HEK293 (cell line): ENCODE measurements at regions of chr7 and their contacts with region 1.

Region 1: GRCh38 chr7:73522105-73522872 is at the start of gene BAZ1B:
- H3K4me3 ChIP-seq: peak within 1 kb of the TSS; percentile 93
- H3K27ac ChIP-seq: peak within 1 kb of the TSS; percentile 99
- H3K4me1 ChIP-seq: no peaks in the 10 kb centered on the region
- CTCF ChIP-seq: peak; percentile 54; the same call in 1 of the 2 replicates

Region 2: DNA sequence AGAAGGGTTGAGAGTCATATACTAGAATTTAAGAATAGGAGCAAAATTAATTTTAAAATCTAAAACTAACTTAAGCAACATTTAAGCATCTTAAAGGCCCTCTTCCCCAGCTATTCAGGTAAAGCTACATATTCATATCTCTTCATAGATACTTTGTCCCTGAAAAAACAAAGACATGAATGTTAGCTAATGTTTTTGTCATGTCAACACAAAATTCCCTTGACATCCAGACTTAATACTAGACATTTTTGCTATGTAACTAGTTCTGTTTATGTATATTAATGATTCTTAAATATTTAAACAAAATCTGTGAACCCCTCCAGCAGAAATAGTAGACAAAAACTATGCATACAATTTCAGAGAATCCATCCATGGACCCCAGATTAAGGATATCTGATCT is 43.7 kb before region 1 on chr7:
- CTCF ChIA-PET with region 1: no interaction called
- POLR2A ChIA-PET with region 1: no interaction called
- H3K4me3 ChIP-seq: no peak overlapping the region
- H3K27ac ChIP-seq: no peak overlapping the region
- H3K4me1 ChIP-seq: peaks cover 2% of the 10 kb centered on the region; the same call in 1 of the 2 replicates
- CTCF ChIP-seq: no peak

Region 3: DNA sequence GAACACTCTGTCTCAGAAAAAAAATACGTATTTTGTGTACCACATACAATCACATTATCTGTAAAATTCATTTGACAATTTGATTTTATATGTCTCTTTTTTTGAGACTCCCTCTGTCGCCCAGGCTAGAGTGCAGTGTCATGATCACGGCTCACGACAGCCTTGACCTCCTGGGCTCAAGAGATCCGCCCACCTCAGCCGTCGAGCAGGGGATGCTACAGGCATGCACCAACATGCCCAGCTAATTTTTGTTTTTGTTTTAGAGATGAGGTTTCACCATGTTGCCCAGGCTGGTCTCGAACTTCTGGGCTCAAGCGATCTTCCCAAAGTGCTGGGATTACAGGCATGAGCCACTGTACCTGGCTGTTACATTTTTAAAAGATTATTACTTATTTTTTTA is 11.5 kb after region 1 on chr7:
- CTCF ChIA-PET with region 1: interaction called, 4 read pairs
- POLR2A ChIA-PET with region 1: interaction called, 12 read pairs
- H3K4me3 ChIP-seq: no peak overlapping the region
- H3K27ac ChIP-seq: no peak overlapping the region; the same call in 1 of the 2 replicates
- H3K4me1 ChIP-seq: no peaks in the 10 kb centered on the region
- CTCF ChIP-seq: no peak

Region 4: DNA sequence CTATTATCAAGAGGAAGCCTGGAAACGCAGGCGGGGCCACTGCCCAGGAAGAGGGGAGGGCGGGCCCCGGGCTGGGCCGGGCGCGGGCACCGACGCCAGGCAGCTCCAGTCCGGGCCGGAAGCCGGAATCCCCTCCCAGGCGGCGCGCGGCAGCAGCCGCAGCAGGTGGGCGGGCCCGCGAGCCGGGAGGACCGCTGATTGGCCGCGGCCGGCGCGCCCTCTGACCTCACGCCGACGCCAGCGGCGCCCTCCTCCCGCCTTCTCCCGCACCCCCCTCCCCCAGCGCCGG is 34.8 kb after region 1 on chr7:
- CTCF ChIA-PET with region 1: no interaction called
- POLR2A ChIA-PET with region 1: interaction called, 24 read pairs
- H3K4me3 ChIP-seq: peak overlapping the region; percentile 94
- H3K27ac ChIP-seq: peak overlapping the region; percentile 96
- H3K4me1 ChIP-seq: peaks cover 3% of the 10 kb centered on the region; the same call in 1 of the 2 replicates
- CTCF ChIP-seq: no peak